ENCODE measurements at regions of chr16 and their contacts with region 1.

Region 1: DNA sequence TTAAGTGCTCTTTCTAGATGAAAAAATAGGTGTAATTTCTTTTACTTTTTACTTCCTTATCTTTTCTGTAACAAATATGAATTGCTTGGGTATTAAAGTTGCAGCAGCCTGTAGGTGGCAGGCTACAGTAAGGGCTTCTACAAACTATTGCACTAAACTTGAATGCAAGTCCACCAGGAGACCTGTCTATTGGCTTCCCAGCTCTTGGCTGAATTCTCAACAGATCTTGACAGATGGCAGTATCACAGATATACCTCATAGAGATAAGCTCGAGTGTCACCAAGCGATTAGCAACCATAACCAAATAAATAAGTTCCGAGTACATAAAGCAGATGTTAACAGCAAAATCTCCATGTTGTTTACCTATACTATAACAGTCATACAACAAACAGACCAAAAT is 5.9 kb downstream of the BBS2 start:
- DNase-seq: peak in 40 of 42 donors; percentile 11 to 87 (median 68)

Region 2: DNA sequence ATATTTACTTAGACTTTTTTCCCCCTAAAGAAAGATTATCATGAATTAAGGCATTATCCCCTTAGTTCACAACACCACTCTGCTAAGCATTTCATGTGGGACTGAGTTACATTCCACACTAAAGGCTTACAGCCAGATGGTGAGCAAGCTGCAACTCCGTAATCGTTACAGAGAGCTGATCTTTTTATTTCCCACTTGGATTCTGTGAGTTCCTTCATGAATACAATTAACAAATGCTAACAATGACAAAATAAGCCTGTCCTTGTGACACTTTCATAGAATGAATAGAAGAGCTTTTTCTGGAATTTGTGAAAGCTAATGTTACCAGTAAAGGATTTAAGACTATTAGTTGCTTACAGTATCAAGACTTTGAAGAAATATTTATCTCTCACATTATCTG is 53.9 kb before region 1 on chr16:
- intact Hi-C with region 1: no loop called
- DNase-seq: peak in 4 of 42 donors; percentile 11 to 36 (median 29)

Region 3: DNA sequence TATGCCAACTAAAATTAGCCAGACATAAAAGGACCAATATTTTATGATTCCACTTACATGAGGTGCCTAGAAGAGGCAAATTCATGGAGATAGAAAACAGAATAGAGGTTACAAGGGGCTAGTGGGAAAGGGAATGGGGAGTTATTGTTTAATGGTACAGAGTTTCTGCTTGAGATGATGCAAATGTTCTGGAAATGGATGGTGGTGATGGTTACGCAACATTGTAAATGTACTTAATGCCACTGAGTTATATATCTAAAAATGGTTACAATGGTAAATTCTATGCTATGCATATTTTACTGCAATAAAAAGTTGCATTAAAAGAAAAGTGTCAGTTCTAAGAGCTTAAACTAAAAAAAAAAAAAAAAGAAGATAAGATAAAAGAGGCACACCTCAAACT is 186.2 kb after region 1 on chr16:
- intact Hi-C with region 1: loop called (anchors 5 kb)
- DNase-seq: no peak

Region 4: DNA sequence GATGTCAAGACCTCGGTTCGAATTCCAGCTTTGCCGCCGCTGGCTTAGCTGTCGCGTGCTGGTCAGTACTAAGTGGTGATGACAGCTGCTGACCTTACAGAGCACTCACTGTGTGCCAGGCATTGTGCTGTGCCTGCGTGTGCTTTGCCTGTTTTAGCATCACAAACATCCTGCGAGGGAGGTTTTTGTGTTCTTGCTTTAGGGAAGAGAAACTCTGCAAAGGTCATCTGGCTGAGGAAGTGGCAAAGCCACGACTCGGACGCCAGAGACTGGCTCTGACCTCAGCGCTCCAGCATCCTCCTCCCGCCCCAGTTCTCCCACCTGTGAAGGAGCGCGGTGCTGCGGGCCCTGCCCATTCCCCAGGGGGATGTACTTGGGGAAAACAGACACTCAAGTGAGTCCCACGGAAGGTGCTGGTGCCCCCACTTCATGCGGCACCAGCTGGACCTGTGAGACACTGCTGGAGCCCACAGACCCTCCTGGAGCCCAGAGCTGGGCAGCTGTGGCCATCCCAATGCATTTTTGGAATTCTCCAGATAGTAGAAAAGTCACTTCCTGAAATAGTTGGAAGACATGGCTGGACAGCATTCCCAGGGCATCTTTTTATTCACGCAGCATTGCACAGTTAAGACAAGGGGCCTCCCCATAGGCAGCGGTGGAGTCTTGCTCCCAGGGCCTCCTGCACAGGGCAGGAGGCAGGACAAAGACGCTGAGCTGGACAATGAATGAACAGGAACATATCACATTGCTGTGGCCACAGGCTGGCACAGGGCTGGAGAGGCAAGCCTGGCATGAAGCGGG is 398.0 kb after region 1 on chr16:
- intact Hi-C with region 1: no loop called
- DNase-seq: peak in 33 of 42 donors; percentile 6 to 58 (median 35)

Measured in head of caudate nucleus (tissue), 42 donors.